ENCODE measurements at regions of chr1 and their contacts with region 1.

Region 1: GRCh38 chr1:160193091-160193819 is 2.9 kb downstream of the CASQ1 start:
- DNase-seq: peak; percentile 89

Region 2: GRCh38 chr1:160219062-160219929 is 26.0 kb after region 1 on chr1:
- intact Hi-C with region 1: loop called (anchors 1 kb)
- DNase-seq: no peak

Region 3: DNA sequence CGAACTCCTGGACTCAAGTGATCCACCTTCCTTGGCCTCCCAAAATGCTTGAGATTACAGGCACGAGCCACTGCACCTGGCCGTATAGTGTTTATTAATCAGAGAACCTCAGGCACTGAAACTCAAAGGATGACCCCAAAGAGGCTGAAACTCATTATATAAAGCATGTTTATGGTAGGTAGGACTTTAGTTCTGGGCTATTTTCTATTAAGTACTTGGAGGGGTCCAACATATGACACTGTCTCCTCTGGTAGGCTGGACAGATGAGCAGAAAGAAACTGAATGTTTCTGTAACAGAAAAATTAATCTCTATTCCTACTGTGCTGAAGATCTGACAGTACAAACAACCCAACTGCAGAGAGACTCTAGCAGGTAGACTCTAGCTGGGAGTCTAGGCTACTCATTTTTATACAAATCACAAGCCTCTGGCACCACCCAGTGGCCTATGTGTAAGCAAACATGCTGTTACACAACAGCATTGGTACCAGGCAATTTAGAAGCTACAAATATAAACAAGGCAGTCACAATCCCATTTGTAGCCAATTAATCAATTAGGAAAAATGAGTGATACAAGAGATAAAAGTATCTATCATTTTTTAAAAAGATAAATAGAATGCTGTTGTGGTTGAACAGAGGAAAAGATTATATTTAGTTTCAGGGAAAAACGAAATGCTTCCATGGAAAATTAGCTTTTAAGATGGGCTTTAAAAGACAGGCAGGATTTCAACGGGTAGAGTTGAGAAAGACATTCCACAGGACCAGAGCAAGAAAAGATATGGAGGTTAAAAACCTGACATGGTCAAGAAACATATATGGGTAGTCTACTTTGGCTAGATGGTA is 58.7 kb after region 1 on chr1:
- intact Hi-C with region 1: loop called (anchors 2 kb)
- DNase-seq: no peak

Region 4: GRCh38 chr1:160291248-160292220 is 98.3 kb after region 1 on chr1:
- intact Hi-C with region 1: loop called (anchors 2 kb)
- DNase-seq: peak; percentile 79